ENCODE measurements at regions of chr18 and their contacts with region 1.

Region 1: DNA sequence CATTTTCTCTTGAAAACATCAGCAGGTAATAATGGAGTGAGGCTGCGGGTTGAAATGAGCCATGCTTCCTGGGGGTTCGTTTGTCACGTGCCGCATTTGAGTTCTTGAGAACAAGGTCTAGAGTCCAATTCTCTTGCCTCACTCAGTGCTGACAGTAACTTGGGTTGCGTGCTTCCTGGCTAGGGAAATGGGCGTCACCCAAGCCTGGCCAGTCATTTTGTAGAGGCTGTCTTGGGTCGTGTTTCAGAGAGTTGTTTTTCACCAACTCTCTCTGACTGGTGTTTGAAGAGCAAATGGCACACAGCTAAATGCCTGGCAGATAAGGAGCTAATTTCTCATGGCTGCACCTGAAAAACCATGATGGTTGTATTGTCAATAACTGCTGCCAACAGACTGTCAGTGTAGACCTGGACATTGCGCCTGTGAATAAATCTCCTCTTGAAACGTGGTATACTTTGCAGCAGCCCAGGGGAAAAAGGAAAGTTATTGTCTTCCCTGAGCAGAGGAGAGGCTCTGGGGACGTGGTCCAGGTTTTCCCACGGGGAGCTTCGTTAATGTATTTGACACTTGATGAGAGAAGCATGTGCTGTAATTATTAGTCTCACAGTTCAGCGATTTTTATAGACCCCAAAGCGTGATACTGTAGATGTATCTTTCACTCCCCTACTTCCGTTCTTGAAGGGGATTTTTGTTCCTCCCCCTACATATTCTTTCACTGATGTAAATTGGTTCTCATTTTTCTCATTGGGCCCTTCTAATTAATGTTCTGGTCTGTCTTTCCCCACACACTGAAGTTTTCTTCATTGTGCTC is 196.0 kb downstream of the FHOD3 start:
- DNase-seq: no peak
- H3K4me3 ChIP-seq: no peak overlapping the region
- H3K27ac ChIP-seq: no peak overlapping the region
- H3K4me1 ChIP-seq: no peaks in the 10 kb centered on the region
- H3K27me3 ChIP-seq: no peaks in the 10 kb centered on the region
- CTCF ChIP-seq: no peak
- POLR2A ChIP-seq: no peak

Region 2: DNA sequence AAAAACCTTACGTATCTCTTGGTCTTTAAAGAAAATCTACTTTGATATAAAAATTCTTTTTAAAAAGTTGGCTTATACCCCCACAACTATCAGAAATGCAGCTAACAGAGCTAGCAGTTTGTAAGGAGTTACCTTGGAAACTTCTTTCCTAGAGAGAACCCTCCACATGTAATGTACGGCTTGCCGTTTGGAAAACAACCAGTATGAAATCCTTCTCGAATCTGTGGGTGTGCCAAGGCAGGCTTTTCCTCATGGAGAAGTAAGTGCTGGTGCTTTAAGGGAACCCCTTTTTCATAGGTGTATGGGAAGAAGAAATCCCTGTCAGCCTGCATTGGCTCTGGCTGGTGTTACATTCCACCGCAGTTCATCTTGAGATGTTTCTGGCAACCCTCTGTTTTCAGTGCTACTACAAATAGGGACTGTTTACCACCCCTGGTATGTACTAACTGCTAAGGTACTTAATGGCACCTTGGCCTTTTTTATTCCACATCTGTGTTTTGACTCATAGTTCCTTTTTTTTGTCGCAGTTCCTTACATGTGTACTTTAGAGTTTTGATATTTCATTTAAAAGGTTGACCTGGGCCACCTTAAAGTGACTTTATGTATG is 52.4 kb after region 1 on chr18:
- intact Hi-C with region 1: loop called (anchors 5 kb)
- DNase-seq: no peak
- H3K4me3 ChIP-seq: no peak overlapping the region
- H3K27ac ChIP-seq: no peak overlapping the region
- H3K4me1 ChIP-seq: no peaks in the 10 kb centered on the region
- H3K27me3 ChIP-seq: no peaks in the 10 kb centered on the region
- CTCF ChIP-seq: no peak
- POLR2A ChIP-seq: no peak